Naive thymus-derived CD4-positive, alpha-beta T cell (primary cell): ENCODE measurements at regions of chr4 and their contacts with region 1.

Region 1: GRCh38 chr4:153573881-153574802 is 108.0 kb downstream of the TMEM131L start:
- DNase-seq: peak; percentile 12 to 77 (median 69)
- ATAC-seq: peak; percentile 94
- H3K4me3 ChIP-seq: no peak overlapping the region
- H3K4me3 Mint-ChIP-seq: peak overlapping the region; percentile 7 to 61 (median 42)
- H3K27ac ChIP-seq: peak overlapping the region; percentile 11
- H3K27ac Mint-ChIP-seq: peak overlapping the region; percentile 30 to 85 (median 83)
- H3K4me1 ChIP-seq: peaks cover 12 to 36% of the 10 kb centered on the region in 2 donors
- H3K4me1 Mint-ChIP-seq: peaks cover 46 to 84% (median 74%) of the 10 kb centered on the region in 7 donors
- H3K27me3 ChIP-seq: no peaks in the 10 kb centered on the region
- H3K27me3 Mint-ChIP-seq: no peaks in the 10 kb centered on the region

Region 2: GRCh38 chr4:153249199-153250041 is 324.7 kb before region 1 on chr4:
- CTCF ChIA-PET with region 1: interaction called, 3 read pairs
- POLR2A ChIA-PET with region 1: no interaction called
- intact Hi-C with region 1: loop called in 1 of 2 experiments (anchors 1 kb)
- DNase-seq: peak; percentile 81 to 91 (median 86)
- ATAC-seq: peak; percentile 98
- H3K4me3 ChIP-seq: peak overlapping the region; percentile 62
- H3K4me3 Mint-ChIP-seq: peak overlapping the region; percentile 85 to 96 (median 92)
- H3K27ac ChIP-seq: peak overlapping the region; percentile 80
- H3K27ac Mint-ChIP-seq: peak overlapping the region; percentile 81 to 98 (median 96)
- H3K4me1 ChIP-seq: peaks cover 3 to 10% of the 10 kb centered on the region in 2 donors
- H3K4me1 Mint-ChIP-seq: peaks cover 7 to 44% (median 26%) of the 10 kb centered on the region in 7 donors
- H3K27me3 ChIP-seq: no peaks in the 10 kb centered on the region
- H3K27me3 Mint-ChIP-seq: peaks cover 0 to 11% (median 0%) of the 10 kb centered on the region in 5 donors

Region 3: DNA sequence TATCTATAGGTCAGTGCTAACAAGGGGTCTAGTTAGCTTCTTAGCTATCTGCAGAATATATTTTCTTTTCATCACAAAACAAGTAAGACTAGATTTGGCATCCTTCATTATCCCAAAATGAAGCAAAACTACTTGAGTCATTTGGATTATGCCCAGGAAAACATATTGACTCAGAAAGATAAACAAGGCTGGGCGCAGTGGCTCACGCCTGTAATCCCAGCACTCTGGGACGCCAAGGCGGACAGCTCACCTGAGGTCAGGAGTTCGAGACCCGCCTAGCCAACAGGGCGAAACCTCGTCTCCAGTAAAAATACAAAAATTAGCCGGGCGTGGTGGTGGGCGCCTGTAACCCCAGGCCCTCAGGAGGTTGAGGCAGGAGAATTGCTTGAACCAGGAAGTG is 247.6 kb before region 1 on chr4:
- CTCF ChIA-PET with region 1: no interaction called
- POLR2A ChIA-PET with region 1: no interaction called
- intact Hi-C with region 1: no loop called
- DNase-seq: no peak
- ATAC-seq: no peak
- H3K4me3 ChIP-seq: no peak overlapping the region
- H3K4me3 Mint-ChIP-seq: no peak overlapping the region
- H3K27ac ChIP-seq: no peak overlapping the region
- H3K27ac Mint-ChIP-seq: no peak overlapping the region
- H3K4me1 ChIP-seq: no peaks in the 10 kb centered on the region
- H3K4me1 Mint-ChIP-seq: no peaks in the 10 kb centered on the region
- H3K27me3 ChIP-seq: no peaks in the 10 kb centered on the region
- H3K27me3 Mint-ChIP-seq: peaks cover 0 to 15% (median 0%) of the 10 kb centered on the region in 5 donors

Region 4: GRCh38 chr4:153438916-153439756 is 135.0 kb before region 1 on chr4:
- CTCF ChIA-PET with region 1: interaction called, 58 read pairs
- POLR2A ChIA-PET with region 1: interaction called, 3 read pairs
- intact Hi-C with region 1: no loop called
- DNase-seq: peak in 7 of 9 donors; percentile 33 to 60 (median 53)
- ATAC-seq: peak; percentile 86
- H3K4me3 ChIP-seq: peak overlapping the region; percentile 71
- H3K4me3 Mint-ChIP-seq: peak overlapping the region; percentile 76 to 98 (median 90)
- H3K27ac ChIP-seq: peak overlapping the region; percentile 81
- H3K27ac Mint-ChIP-seq: peak overlapping the region; percentile 78 to 98 (median 93)
- H3K4me1 ChIP-seq: peaks cover 8 to 20% of the 10 kb centered on the region in 2 donors
- H3K4me1 Mint-ChIP-seq: peaks cover 20 to 69% (median 58%) of the 10 kb centered on the region in 7 donors
- H3K27me3 ChIP-seq: no peaks in the 10 kb centered on the region
- H3K27me3 Mint-ChIP-seq: peaks cover 0 to 2% (median 0%) of the 10 kb centered on the region in 5 donors

Region 5: GRCh38 chr4:153497988-153498967 is 75.9 kb before region 1 on chr4:
- CTCF ChIA-PET with region 1: interaction called, 4 read pairs
- POLR2A ChIA-PET with region 1: interaction called, 8 read pairs
- intact Hi-C with region 1: loop called in 1 of 2 experiments (anchors 2 kb)
- DNase-seq: peak in 4 of 9 donors; percentile 31 to 46 (median 44)
- ATAC-seq: peak; percentile 60
- H3K4me3 ChIP-seq: peak overlapping the region; percentile 20
- H3K4me3 Mint-ChIP-seq: peak overlapping the region; percentile 74 to 85 (median 80)
- H3K27ac ChIP-seq: peak overlapping the region; percentile 83
- H3K27ac Mint-ChIP-seq: peak overlapping the region; percentile 94 to 100 (median 98)
- H3K4me1 ChIP-seq: peaks cover 37 to 89% of the 10 kb centered on the region in 2 donors
- H3K4me1 Mint-ChIP-seq: peaks cover 72 to 99% (median 91%) of the 10 kb centered on the region in 7 donors
- H3K27me3 ChIP-seq: no peaks in the 10 kb centered on the region
- H3K27me3 Mint-ChIP-seq: no peaks in the 10 kb centered on the region

Region 6: DNA sequence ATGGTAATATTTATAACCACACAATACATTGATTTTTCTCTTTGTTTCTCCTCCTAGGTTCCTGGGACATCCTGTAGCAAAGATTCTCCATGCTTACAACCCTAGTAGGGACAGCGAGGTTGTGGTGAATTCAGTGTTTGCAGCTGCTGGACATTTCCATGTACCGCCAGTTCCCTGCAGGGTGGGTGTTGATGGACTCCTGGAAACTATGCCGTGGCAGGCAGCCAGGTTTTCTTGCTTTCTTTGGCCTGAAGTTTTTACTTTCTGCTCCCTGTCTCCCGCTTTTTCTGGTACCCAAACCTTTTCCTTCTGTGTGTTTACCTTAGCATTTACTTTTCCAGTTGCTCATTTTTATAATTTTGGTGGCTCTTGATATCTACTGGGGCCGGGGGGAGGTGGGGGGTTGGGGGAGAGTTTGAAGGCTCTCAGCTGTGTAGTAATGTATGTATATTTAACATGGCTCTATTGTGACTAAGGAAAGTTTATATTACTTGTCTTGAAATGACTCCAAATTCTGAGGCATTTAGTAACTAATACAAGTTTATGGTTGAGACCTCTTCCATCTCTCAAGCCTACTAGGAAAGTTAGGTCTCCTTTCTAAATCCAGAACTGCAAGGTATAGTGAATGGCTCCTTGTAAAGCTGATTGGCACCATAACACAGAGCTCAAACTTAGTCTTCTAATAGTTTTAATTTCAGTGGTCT is 18.3 kb before region 1 on chr4:
- CTCF ChIA-PET with region 1: interaction called, 10 read pairs
- POLR2A ChIA-PET with region 1: interaction called, 3 read pairs
- intact Hi-C with region 1: no loop called
- DNase-seq: no peak
- ATAC-seq: no peak
- H3K4me3 ChIP-seq: no peak overlapping the region
- H3K4me3 Mint-ChIP-seq: no peak overlapping the region
- H3K27ac ChIP-seq: no peak overlapping the region
- H3K27ac Mint-ChIP-seq: peak overlapping the region in 7 of 9 donors; percentile 8 to 84 (median 43)
- H3K4me1 ChIP-seq: no peaks in the 10 kb centered on the region
- H3K4me1 Mint-ChIP-seq: peaks cover 11 to 77% (median 61%) of the 10 kb centered on the region in 7 donors
- H3K27me3 ChIP-seq: no peaks in the 10 kb centered on the region
- H3K27me3 Mint-ChIP-seq: no peaks in the 10 kb centered on the region

Region 7: GRCh38 chr4:153750197-153750817 is 176.2 kb after region 1 on chr4:
- CTCF ChIA-PET with region 1: interaction called, 4 read pairs
- POLR2A ChIA-PET with region 1: no interaction called
- intact Hi-C with region 1: loop called in 1 of 2 experiments (anchors 1 kb)
- DNase-seq: peak; percentile 37 to 78 (median 64)
- ATAC-seq: peak; percentile 82
- H3K4me3 ChIP-seq: no peak overlapping the region
- H3K4me3 Mint-ChIP-seq: no peak overlapping the region
- H3K27ac ChIP-seq: no peak overlapping the region
- H3K27ac Mint-ChIP-seq: peak overlapping the region in 2 of 9 donors; percentile 26 to 45
- H3K4me1 ChIP-seq: peaks cover 0 to 12% of the 10 kb centered on the region in 2 donors
- H3K4me1 Mint-ChIP-seq: peaks cover 4 to 31% (median 17%) of the 10 kb centered on the region in 7 donors
- H3K27me3 ChIP-seq: no peaks in the 10 kb centered on the region
- H3K27me3 Mint-ChIP-seq: peaks cover 0 to 32% (median 0%) of the 10 kb centered on the region in 5 donors

Region 8: GRCh38 chr4:155114790-155115189 is 1540.6 kb after region 1 on chr4:
- CTCF ChIA-PET with region 1: no interaction called
- POLR2A ChIA-PET with region 1: no interaction called
- intact Hi-C with region 1: no loop called
- DNase-seq: no peak
- ATAC-seq: no peak
- H3K4me3 ChIP-seq: no peak overlapping the region
- H3K4me3 Mint-ChIP-seq: no peak overlapping the region
- H3K27ac ChIP-seq: no peak overlapping the region
- H3K27ac Mint-ChIP-seq: no peak overlapping the region
- H3K4me1 ChIP-seq: no peaks in the 10 kb centered on the region
- H3K4me1 Mint-ChIP-seq: no peaks in the 10 kb centered on the region
- H3K27me3 ChIP-seq: no peaks in the 10 kb centered on the region
- H3K27me3 Mint-ChIP-seq: peaks cover 0 to 25% (median 0%) of the 10 kb centered on the region in 5 donors